ENCODE measurements at regions of chr3 and their contacts with region 1.

Region 1: GRCh38 chr3:183085634-183086390 is 13.5 kb downstream of the MCCC1 start:
- DNase-seq: peak; percentile 16
- H3K4me3 Mint-ChIP-seq: no peak overlapping the region
- H3K27ac Mint-ChIP-seq: no peak overlapping the region
- H3K4me1 Mint-ChIP-seq: no peaks in the 10 kb centered on the region
- H3K27me3 Mint-ChIP-seq: no peaks in the 10 kb centered on the region

Region 2: DNA sequence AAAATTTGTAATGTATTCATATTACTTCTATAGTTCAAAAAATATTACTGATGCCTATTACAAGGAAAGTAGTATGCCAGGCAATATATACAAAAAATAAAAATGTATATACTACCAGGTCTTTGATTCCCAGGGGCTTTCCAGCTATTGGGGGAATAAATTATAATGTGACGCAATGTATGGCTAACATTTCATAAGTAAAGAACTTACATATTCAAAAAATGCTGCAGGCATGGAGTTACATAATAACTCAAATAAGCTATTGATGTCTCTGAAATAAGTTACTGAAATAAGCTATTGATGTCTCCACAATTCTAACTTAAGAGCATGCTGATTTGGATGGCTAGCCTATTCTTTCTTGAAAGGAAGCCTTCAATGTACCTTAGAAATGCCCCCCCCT is 16.7 kb before region 1 on chr3:
- CTCF ChIA-PET with region 1: interaction called, 15 read pairs
- POLR2A ChIA-PET with region 1: no interaction called
- intact Hi-C with region 1: no loop called
- DNase-seq: no peak
- H3K4me3 Mint-ChIP-seq: no peak overlapping the region
- H3K27ac Mint-ChIP-seq: no peak overlapping the region
- H3K4me1 Mint-ChIP-seq: peaks cover 6% of the 10 kb centered on the region
- H3K27me3 Mint-ChIP-seq: no peaks in the 10 kb centered on the region

Measured in activated CD4-positive, alpha-beta memory T cell treated with anti-CD3 and anti-CD28 coated beads for 36 hours (primary cell).